CD4-positive, alpha-beta memory T cell (primary cell): ENCODE measurements at regions of chr7 and their contacts with region 1.

Region 1: GRCh38 chr7:28062197-28062991 is 118.2 kb downstream of the JAZF1 start:
- DNase-seq: peak in 3 of 5 donors; percentile 8 to 35 (median 14)
- H3K4me3 ChIP-seq: no peak overlapping the region
- H3K4me3 Mint-ChIP-seq: no peak overlapping the region
- H3K27ac ChIP-seq: no peak overlapping the region
- H3K27ac Mint-ChIP-seq: peak overlapping the region in 1 of 7 donors; percentile 27
- H3K4me1 ChIP-seq: no peaks in the 10 kb centered on the region
- H3K4me1 Mint-ChIP-seq: peaks cover 0 to 8% (median 7%) of the 10 kb centered on the region in 4 donors
- H3K27me3 ChIP-seq: no peaks in the 10 kb centered on the region
- H3K27me3 Mint-ChIP-seq: no peaks in the 10 kb centered on the region

Region 2: GRCh38 chr7:27662490-27663205 is 399.7 kb before region 1 on chr7 and contains the start of gene HIBADH:
- CTCF ChIA-PET with region 1: no interaction called
- POLR2A ChIA-PET with region 1: no interaction called
- intact Hi-C with region 1: no loop called
- DNase-seq: peak; percentile 96 to 99 (median 98)
- H3K4me3 ChIP-seq: peak within 1 kb of the TSS; percentile 67 to 83
- H3K4me3 Mint-ChIP-seq: peak within 1 kb of the TSS; percentile 82 to 89 (median 87)
- H3K27ac ChIP-seq: peak within 1 kb of the TSS; percentile 69
- H3K27ac Mint-ChIP-seq: peak within 1 kb of the TSS; percentile 89 to 95 (median 93)
- H3K4me1 ChIP-seq: peaks cover 16% of the 10 kb centered on the region
- H3K4me1 Mint-ChIP-seq: peaks cover 10 to 30% (median 18%) of the 10 kb centered on the region in 4 donors
- H3K27me3 ChIP-seq: no peaks in the 10 kb centered on the region
- H3K27me3 Mint-ChIP-seq: peaks cover 0 to 2% of the 10 kb centered on the region in 2 donors
- total RNA-seq, gene HIBADH: 13.6 to 13.7 TPM

Region 3: DNA sequence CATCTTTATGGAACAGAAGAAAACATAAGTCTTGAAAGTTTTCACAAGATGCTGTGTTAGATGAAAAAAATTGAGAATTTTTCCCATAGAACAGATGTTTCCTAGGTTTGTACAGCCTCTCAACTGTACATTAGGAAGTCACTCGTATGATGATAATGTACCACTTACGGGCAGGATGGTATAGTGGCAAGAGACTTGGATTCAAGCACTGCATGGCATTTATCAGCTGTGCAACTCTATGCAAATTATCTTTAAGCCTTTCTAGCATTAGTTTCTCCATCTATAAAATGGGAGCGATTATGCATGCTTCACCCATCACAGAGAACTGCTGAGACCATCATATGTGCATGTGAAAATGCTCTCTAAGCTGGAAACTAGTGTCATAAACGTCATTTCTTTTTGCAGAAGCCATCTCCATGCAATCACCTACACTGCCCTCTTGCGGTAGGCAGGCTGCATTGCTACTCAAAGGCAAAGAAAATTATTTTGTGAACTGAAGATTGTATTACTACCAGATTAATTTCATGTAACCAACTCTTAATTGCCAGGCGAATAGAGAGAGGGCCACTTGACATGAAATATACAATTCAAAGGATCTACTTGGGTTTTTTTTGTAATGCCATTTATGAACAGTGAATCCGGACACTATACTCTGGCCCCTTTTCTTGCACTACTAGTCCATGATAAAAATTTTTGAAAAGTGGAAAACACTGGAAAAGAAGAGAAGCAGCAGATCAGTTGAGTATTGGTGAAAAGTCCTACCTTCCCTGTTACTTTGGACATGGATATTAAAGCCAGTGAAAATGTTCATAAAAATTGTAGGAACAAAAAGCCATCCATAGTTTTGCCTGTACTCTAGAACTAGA is 15.9 kb after region 1 on chr7:
- CTCF ChIA-PET with region 1: interaction called, 27 read pairs
- POLR2A ChIA-PET with region 1: no interaction called
- intact Hi-C with region 1: no loop called
- DNase-seq: peak in 4 of 5 donors; percentile 37 to 55 (median 43)
- H3K4me3 ChIP-seq: no peak overlapping the region
- H3K4me3 Mint-ChIP-seq: no peak overlapping the region
- H3K27ac ChIP-seq: no peak overlapping the region
- H3K27ac Mint-ChIP-seq: peak overlapping the region in 1 of 7 donors; percentile 55
- H3K4me1 ChIP-seq: no peaks in the 10 kb centered on the region
- H3K4me1 Mint-ChIP-seq: peaks cover 0 to 20% (median 9%) of the 10 kb centered on the region in 4 donors
- H3K27me3 ChIP-seq: no peaks in the 10 kb centered on the region
- H3K27me3 Mint-ChIP-seq: no peaks in the 10 kb centered on the region

Region 4: DNA sequence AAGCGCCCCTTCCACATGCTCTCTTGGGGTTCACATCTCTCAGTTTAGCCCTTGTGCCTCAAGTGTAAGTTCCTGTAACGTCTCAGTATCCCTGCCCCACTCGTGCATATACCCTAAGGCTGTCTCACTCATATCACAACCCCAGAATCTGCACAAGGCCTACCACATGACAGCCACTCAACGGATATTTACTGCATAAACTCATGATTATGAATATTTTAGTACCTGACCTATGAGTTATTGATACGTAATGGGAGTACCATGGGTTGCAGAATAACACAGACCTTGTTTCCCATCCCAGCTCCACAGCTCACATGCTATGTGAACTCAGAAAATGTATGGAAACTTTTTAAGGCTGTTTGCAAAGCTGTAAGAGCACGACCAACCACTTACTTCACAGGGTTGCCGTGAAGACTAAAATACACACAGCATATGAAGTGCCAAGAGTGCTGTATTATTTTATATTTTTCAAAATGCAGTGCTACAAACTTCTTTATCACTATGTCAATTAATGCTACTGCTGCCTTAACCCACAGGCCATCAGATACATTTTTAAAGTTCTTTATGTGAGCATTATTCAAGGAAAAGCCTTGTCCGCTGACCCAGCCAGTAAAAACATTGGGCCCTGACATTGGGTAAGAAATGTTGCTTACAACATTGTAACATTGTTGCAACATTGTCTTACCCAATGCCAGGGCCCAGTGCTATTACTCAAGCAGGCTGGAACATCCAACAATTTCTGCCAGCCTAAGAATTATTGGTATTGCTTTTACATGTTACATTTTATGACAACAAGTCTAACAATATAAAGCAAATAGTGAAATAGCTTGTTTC is 21.0 kb after region 1 on chr7:
- CTCF ChIA-PET with region 1: interaction called, 27 read pairs
- POLR2A ChIA-PET with region 1: no interaction called
- intact Hi-C with region 1: no loop called
- DNase-seq: no peak
- H3K4me3 ChIP-seq: no peak overlapping the region
- H3K4me3 Mint-ChIP-seq: no peak overlapping the region
- H3K27ac ChIP-seq: no peak overlapping the region
- H3K27ac Mint-ChIP-seq: peak overlapping the region in 3 of 7 donors; percentile 8 to 87 (median 59)
- H3K4me1 ChIP-seq: no peaks in the 10 kb centered on the region
- H3K4me1 Mint-ChIP-seq: peaks cover 0 to 14% (median 6%) of the 10 kb centered on the region in 4 donors
- H3K27me3 ChIP-seq: no peaks in the 10 kb centered on the region
- H3K27me3 Mint-ChIP-seq: no peaks in the 10 kb centered on the region

Region 5: DNA sequence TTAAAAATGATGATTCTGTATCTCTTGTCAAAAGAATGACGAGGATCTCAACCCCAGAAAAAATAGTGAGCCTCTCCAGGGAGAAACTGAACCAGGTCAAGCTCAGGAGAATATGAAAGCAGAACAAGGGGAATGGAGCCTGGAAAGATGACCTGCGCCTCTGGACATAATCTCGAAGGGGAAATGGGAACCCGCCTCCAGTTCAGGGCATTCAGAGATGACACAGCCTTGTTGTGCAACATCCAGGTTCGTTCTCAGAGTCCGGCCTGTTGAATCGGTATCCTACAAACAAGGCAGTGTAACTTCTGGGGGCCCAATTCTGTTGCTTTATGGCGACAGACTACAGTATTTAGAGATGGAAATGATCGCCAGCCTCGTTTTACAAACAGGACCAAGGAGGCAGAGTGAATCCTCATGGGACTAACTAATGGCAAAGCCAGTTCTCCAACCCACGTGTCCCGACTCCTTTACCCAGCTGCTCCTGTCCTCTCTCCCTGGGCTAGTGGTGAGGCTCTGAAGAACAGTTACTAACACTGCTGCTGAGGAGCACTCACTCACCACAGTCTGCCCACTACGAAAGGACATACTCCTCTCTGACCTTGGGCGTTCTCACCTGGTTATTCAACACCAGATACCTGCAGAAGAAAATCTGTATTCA is 50.6 kb after region 1 on chr7:
- CTCF ChIA-PET with region 1: no interaction called
- POLR2A ChIA-PET with region 1: no interaction called
- intact Hi-C with region 1: no loop called
- DNase-seq: no peak
- H3K4me3 ChIP-seq: no peak overlapping the region
- H3K4me3 Mint-ChIP-seq: no peak overlapping the region
- H3K27ac ChIP-seq: no peak overlapping the region
- H3K27ac Mint-ChIP-seq: no peak overlapping the region
- H3K4me1 ChIP-seq: no peaks in the 10 kb centered on the region
- H3K4me1 Mint-ChIP-seq: peaks cover 0 to 17% (median 11%) of the 10 kb centered on the region in 4 donors
- H3K27me3 ChIP-seq: no peaks in the 10 kb centered on the region
- H3K27me3 Mint-ChIP-seq: no peaks in the 10 kb centered on the region